ENCODE measurements at regions of chr3 and their contacts with region 1.

Region 1: DNA sequence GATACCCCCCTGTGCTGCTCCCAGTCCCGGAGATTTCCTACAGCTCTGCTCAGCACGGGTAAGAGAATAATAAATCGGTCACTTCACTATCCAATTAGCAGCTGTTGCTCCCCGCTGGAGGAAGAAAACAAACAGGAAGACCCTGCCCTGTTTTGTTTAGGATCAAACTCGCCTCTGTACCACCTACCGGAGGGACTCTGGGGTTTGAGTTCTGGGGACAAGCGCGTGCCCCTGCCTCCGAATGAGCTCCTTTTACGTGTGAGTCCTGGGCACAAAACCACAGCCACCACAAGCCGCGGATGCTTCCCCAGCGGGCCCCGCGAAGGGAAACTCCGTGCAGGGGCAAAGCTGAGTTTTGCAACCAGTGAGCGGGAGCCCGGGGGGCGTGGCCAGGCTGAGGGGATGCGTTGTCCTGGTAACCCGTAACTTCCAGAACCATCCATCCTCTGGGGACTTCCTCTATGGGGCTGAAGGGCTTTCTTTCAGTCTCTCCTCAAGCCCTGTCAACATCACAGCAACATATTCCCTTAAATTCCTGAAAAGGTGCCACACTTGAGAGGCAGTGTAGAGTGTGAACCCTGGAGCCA is 315.7 kb upstream of the PROK2 start:
- DNase-seq: peak; percentile 76 to 94
- ATAC-seq: peak; percentile 88 to 90 (median 88)
- H3K4me3 ChIP-seq: peak overlapping the region; percentile 10
- H3K4me3 Mint-ChIP-seq: peak overlapping the region; percentile 77
- H3K27ac ChIP-seq: peak overlapping the region; percentile 49
- H3K27ac Mint-ChIP-seq: peak overlapping the region; percentile 2 to 70
- H3K4me1 ChIP-seq: peaks cover 40% of the 10 kb centered on the region
- H3K4me1 Mint-ChIP-seq: peaks cover 18 to 20% of the 10 kb centered on the region in 2 donors
- H3K27me3 ChIP-seq: peaks cover 5% of the 10 kb centered on the region
- H3K27me3 Mint-ChIP-seq: peaks cover 19 to 25% of the 10 kb centered on the region in 2 donors
- CTCF ChIP-seq: no peak

Region 2: GRCh38 chr3:71725279-71725991 is 375.3 kb before region 1 on chr3 and contains the start of gene EIF4E3:
- intact Hi-C with region 1: loop called (anchors 10 kb)
- DNase-seq: peak; percentile 51 to 76
- ATAC-seq: peak; percentile 57 to 75 (median 74)
- H3K4me3 ChIP-seq: peak within 1 kb of the TSS; percentile 78
- H3K4me3 Mint-ChIP-seq: peak within 1 kb of the TSS; percentile 100
- H3K27ac ChIP-seq: peak within 1 kb of the TSS; percentile 72
- H3K27ac Mint-ChIP-seq: peak within 1 kb of the TSS; percentile 95 to 97
- H3K4me1 ChIP-seq: peaks cover 50% of the 10 kb centered on the region
- H3K4me1 Mint-ChIP-seq: peaks cover 60 to 67% of the 10 kb centered on the region in 2 donors
- H3K27me3 ChIP-seq: no peaks in the 10 kb centered on the region
- H3K27me3 Mint-ChIP-seq: no peaks in the 10 kb centered on the region
- CTCF ChIP-seq: no peak
- total RNA-seq, gene EIF4E3: 44.9 to 52.2 (median 46.7) TPM